ENCODE measurements at regions of chr6 and their contacts with region 1.

Region 1: DNA sequence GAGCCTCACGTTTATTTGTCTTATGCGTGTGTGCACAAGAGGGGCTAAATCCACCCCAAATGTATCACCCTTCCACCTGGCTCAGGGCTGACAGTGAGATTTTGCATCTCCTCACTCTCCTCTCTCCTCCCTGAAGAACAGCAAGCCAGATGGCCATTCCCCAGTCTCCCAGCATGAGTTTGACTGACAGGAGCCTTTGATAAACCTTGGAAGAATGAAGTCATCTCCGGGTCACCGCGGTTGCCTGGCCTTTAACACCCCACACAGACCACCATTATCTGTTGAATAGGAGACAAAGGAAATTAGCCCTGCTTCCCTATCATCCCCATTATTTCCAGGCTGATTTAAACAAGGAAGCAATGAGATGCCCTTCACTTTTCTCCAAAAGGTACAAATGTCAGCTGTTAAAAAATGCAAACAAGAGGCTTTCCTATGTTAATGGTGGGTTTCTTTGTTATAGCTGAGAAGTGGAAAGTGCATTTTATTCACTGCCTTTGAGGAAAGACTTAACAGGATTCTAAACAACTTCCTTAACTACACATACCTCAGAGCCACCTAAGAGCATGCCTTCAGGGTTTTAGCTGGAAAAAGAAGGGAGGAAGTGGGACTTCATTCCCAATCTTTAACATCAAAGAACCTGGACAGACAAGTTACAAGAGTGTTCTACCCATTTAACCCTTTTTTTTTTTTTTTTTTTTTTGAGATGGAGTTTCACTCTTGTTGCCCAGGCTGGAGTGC is 524.8 kb upstream of the ID4 start:
- DNase-seq: no peak
- H3K4me3 ChIP-seq: no peak overlapping the region
- H3K27ac ChIP-seq: no peak overlapping the region
- H3K4me1 ChIP-seq: peaks cover 0 to 10% (median 5%) of the 10 kb centered on the region in 4 donors
- H3K27me3 ChIP-seq: no peaks in the 10 kb centered on the region
- CTCF ChIP-seq: no peak
- EP300 ChIP-seq: no peak
- POLR2A ChIP-seq: no peak

Region 2: DNA sequence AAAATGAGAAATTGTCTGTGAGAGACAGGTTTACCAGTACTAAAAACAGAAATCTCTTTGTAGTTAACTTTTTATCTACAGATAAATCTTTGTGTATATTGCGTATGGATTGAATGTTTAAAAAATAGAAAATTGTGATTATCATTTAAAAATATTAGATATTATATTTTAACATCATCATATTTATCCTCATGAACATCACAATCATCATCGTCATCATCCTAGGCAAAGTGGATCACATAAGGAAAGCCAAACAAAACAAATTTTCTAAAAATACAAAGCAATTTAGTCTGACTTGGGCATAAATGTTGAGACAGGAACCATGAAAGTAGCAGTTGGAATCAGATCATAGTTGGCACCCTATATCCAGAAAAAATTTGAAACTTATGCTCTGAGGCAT is 432.5 kb before region 1 on chr6:
- intact Hi-C with region 1: no loop called
- DNase-seq: no peak
- H3K4me3 ChIP-seq: no peak overlapping the region
- H3K27ac ChIP-seq: no peak overlapping the region
- H3K4me1 ChIP-seq: no peaks in the 10 kb centered on the region
- H3K27me3 ChIP-seq: no peaks in the 10 kb centered on the region
- CTCF ChIP-seq: no peak
- EP300 ChIP-seq: no peak
- POLR2A ChIP-seq: no peak

Region 3: GRCh38 chr6:19153270-19153980 is 159.0 kb before region 1 on chr6:
- intact Hi-C with region 1: loop called (anchors 10 kb)
- DNase-seq: no peak
- H3K4me3 ChIP-seq: no peak overlapping the region
- H3K27ac ChIP-seq: peak overlapping the region; percentile 3 to 54 (median 27)
- H3K4me1 ChIP-seq: peaks cover 4 to 23% (median 20%) of the 10 kb centered on the region in 4 donors
- H3K27me3 ChIP-seq: no peaks in the 10 kb centered on the region
- CTCF ChIP-seq: no peak
- EP300 ChIP-seq: no peak
- POLR2A ChIP-seq: no peak

Region 4: GRCh38 chr6:19399406-19399805 is 87.0 kb after region 1 on chr6:
- intact Hi-C with region 1: no loop called
- DNase-seq: no peak
- H3K4me3 ChIP-seq: no peak overlapping the region
- H3K27ac ChIP-seq: no peak overlapping the region
- H3K4me1 ChIP-seq: peaks cover 0 to 7% (median 0%) of the 10 kb centered on the region in 4 donors
- H3K27me3 ChIP-seq: no peaks in the 10 kb centered on the region
- CTCF ChIP-seq: no peak
- EP300 ChIP-seq: no peak
- POLR2A ChIP-seq: no peak